HEK293 (cell line): ENCODE measurements at regions of chr1 and their contacts with region 1.

Region 1: DNA sequence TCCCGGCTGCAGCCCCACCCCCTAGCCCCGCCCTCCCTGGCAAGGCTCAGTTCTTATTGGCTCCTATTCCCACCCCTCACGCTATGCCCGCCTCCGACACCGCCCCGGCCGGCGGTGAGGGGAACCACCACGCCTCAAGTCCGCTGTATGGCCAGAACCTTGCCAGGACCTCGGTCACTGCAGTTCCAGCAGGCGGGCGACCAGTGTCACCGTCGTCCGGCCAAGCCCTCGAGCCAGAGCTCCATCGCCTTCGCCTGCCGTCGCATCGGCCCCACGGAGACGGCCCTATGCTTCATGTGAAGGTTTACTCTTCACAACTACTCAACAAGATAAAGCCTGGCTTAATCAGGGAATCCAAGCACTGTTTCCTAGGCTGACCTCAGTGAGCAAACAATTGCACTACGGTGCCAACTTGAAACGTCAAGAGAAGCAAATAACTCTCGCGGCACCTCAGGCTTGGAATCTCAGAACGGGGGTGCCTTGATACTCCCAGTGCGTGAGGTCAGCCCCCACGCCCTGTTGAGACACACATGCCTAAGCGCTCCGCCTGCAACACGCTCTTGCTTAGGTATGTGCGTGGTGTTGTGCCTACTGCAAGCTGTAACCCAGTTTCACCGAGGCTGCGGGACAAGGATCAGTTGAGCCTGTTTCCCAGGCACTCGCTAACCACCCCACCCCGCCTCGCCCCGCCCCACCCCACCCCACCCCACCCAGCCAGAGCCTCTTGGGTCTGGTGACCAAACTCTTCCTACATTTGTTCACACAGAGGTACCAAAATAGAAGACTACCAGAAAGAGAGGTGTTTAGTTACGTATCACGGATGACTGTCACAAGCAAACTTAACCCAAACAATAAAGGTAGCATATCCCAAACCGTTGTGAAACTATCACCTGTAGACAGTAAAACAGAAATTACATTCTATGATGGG is 498 bp upstream of the DENND2C start:
- H3K4me3 ChIP-seq: peak overlapping the region; percentile 80
- H3K27ac ChIP-seq: peak overlapping the region; percentile 64; the same call in 1 of the 2 replicates
- H3K4me1 ChIP-seq: peaks cover 6% of the 10 kb centered on the region; the same call in 1 of the 2 replicates
- CTCF ChIP-seq: no peak

Region 2: DNA sequence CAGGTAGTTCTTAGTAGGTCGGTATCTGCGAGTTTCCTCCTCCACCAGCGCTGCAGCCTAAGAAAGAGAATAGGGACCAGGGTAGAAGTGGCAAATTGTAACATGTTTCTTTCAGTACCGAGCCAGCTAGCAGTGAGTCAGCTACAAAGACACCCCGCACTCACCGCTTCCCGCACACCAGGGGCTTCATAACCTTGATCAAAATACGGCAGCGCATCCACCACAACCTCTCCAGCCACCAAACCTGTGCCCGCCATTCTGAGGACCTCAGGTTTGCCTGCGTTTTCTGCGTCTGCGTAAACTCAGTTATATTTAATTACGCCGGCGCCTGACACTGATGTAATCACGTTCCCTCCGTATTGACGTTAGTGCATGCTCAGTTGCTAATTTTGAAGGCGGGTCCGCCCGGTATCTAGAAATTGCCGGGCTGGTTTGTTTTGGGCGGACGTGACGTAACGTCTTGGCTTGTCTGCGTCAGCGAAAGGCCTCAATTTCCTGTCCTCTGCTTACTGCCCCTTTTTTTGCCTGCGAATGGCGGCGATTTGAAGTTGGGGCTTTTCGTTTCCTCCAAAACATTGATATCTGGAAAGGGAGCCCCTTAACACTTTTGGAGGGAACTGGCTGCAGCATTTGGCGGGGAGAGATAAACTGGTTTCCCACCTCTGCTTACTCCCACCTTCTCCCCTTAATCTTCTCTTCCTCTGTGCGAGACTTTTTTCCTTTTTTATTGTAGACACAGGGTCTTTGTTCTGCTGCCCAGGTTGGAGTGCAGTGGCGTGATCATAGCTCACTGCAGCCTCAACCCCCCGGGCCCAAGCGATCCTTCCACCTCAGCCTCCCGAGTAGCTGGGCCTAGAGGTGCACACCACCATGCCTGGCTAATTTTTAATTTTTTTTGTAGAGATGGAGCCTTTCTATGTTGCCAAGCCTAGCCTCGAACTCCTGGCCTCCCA is 88.7 kb before region 1 on chr1 and contains the start of gene BCAS2:
- CTCF ChIA-PET with region 1: no interaction called
- POLR2A ChIA-PET with region 1: interaction called, 11 read pairs
- H3K4me3 ChIP-seq: peak within 1 kb of the TSS; percentile 94
- H3K27ac ChIP-seq: peak within 1 kb of the TSS; percentile 50
- H3K4me1 ChIP-seq: no peaks in the 10 kb centered on the region
- CTCF ChIP-seq: no peak

Region 3: DNA sequence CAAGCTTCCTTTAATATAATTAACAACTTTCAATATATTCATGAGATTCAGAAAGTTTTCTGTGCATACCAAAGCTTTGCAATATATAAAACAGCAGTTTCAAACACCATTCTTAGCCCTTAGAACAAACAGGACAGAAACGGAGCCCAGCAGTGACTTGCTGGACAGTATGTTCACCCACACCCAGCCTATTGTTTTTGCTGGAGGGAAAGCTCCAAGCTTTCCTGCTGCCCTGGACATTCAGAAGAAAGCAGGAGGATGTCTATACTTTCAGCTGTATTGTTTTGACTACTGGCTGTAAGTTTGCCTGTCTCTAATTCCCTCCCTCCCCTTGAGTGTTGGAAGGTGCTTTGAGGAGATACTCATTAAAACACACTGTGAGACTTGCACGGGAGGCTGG is 10.1 kb before region 1 on chr1:
- CTCF ChIA-PET with region 1: interaction called, 4 read pairs
- POLR2A ChIA-PET with region 1: interaction called, 15 read pairs
- H3K4me3 ChIP-seq: no peak overlapping the region
- H3K27ac ChIP-seq: no peak overlapping the region
- H3K4me1 ChIP-seq: no peaks in the 10 kb centered on the region
- CTCF ChIP-seq: no peak